IMR-90 (cell line): ENCODE measurements at regions of chrX and their contacts with region 1.

Region 1: DNA sequence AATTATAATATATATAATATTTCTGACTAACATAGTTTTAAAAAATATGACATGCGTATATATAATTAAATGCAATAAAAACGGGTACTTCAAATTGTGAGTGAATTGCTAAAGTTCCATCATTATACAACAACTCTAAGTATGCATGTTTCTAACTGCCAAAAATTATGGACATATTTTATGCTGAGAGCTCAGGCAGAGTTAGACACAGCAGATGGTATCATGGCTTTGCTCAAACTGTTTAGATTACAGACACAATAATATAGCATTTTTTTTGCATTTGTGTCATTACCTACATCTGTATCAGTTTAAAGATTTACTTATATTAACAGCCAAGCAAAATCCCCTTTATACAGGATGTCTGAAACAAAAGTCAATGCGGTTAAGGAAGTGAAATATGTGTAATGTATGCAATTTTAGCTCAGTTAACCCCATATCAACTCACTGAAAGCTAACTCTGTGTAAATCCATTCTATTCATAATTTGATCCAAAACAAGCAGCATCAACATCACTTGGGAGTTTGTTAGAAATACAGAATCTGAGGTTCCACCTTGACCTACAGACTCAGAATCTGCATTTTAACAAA is 119.1 kb upstream of the CNKSR2 start:
- DNase-seq: no peak
- ATAC-seq: no peak
- H3K4me3 ChIP-seq: no peak overlapping the region
- H3K27ac ChIP-seq: no peak overlapping the region
- H3K4me1 ChIP-seq: no peaks in the 10 kb centered on the region
- H3K27me3 ChIP-seq: no peaks in the 10 kb centered on the region
- CTCF ChIP-seq: no peak
- POLR2A ChIP-seq: no peak
- RAD21 ChIP-seq: no peak

Region 2: GRCh38 chrX:20802041-20802440 is 453.1 kb before region 1 on chrX:
- CTCF ChIA-PET with region 1: no interaction called
- POLR2A ChIA-PET with region 1: no interaction called
- dilution Hi-C with region 1: no loop called
- in situ Hi-C with region 1: no loop called
- intact Hi-C with region 1: no loop called
- DNase-seq: no peak
- ATAC-seq: no peak
- H3K4me3 ChIP-seq: no peak overlapping the region
- H3K27ac ChIP-seq: no peak overlapping the region
- H3K4me1 ChIP-seq: no peaks in the 10 kb centered on the region
- H3K27me3 ChIP-seq: no peaks in the 10 kb centered on the region
- CTCF ChIP-seq: no peak
- POLR2A ChIP-seq: no peak
- RAD21 ChIP-seq: no peak

Region 3: DNA sequence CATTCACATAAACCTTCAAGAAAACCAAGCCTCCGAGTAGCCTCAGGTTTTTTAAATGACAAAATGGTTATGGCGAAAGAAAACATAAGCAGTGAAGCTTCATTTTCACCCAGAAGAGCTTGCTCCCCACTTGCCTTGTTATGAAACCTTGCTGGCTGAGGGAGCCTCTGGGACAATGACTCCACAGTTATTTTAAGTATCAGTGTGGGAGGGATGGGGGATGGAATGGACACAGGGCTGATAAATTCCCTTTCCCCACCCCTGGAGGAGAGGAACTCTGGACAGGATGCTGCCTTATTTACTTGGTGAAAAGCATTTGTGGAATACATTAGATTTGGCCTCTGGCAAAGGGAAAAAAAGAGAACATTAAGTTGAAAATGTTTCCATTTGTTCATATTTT is 101.6 kb before region 1 on chrX:
- CTCF ChIA-PET with region 1: no interaction called
- POLR2A ChIA-PET with region 1: no interaction called
- dilution Hi-C with region 1: no loop called
- in situ Hi-C with region 1: loop called (anchors 25 kb)
- intact Hi-C with region 1: no loop called
- DNase-seq: peak; percentile 4
- ATAC-seq: no peak
- H3K4me3 ChIP-seq: no peak overlapping the region
- H3K27ac ChIP-seq: no peak overlapping the region
- H3K4me1 ChIP-seq: no peaks in the 10 kb centered on the region
- H3K27me3 ChIP-seq: no peaks in the 10 kb centered on the region
- CTCF ChIP-seq: no peak
- POLR2A ChIP-seq: no peak
- RAD21 ChIP-seq: no peak

Region 4: DNA sequence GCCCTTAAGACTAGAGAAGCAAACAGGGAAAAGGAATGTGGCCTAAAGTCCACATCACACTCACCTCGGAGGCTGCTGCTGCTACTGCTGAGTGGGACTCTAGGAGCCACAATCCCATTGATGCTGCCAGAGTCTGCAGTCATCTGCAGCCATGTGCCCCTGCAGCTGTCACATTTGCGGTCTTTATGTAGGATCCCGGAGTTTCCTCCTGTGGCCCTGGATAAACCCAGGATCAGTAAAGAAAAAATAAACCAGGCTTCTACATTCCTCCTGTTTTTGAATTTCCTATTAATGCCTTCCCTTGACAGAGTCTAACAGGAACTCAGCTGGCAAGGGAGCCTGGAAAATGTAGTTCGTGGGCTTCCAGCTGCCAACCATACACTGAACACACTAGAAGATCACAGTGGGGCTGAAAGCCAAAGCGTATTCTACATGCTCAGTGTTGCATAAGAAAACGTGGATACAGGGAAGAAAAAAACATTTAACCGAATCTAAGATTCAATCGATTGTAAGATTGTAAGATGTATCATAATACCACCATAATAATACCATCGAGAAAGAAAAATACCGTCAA is 766.7 kb after region 1 on chrX:
- CTCF ChIA-PET with region 1: no interaction called
- POLR2A ChIA-PET with region 1: no interaction called
- dilution Hi-C with region 1: no loop called
- in situ Hi-C with region 1: no loop called
- intact Hi-C with region 1: no loop called
- DNase-seq: no peak
- ATAC-seq: no peak
- H3K4me3 ChIP-seq: no peak overlapping the region
- H3K27ac ChIP-seq: no peak overlapping the region
- H3K4me1 ChIP-seq: no peaks in the 10 kb centered on the region
- H3K27me3 ChIP-seq: no peaks in the 10 kb centered on the region; the same call in 1 of the 2 replicates
- CTCF ChIP-seq: no peak
- POLR2A ChIP-seq: no peak
- RAD21 ChIP-seq: no peak